SK-N-SH (cell line): ENCODE measurements at regions of chr3 and their contacts with region 1.

Region 1: GRCh38 chr3:49411968-49412631 is at the starts of genes RHOA and TCTA:
- DNase-seq: peak; percentile 100
- H3K4me3 ChIP-seq: peak within 1 kb of the TSS; percentile 78 to 84
- H3K27ac ChIP-seq: peak within 1 kb of the TSS; percentile 89 to 91
- H3K4me1 ChIP-seq: peaks cover 0 to 19% of the 10 kb centered on the region in 2 experiments; a peak in 2 of 4 replicates
- H3K27me3 ChIP-seq: no peaks in the 10 kb centered on the region
- CTCF ChIP-seq: no peak
- EP300 ChIP-seq: no peak
- RAD21 ChIP-seq: no peak
- polyA plus RNA-seq, gene RHOA: 221 and 312 TPM in 2 replicates
- polyA plus RNA-seq, gene TCTA: 42.1 and 57.5 TPM in 2 replicates

Region 2: DNA sequence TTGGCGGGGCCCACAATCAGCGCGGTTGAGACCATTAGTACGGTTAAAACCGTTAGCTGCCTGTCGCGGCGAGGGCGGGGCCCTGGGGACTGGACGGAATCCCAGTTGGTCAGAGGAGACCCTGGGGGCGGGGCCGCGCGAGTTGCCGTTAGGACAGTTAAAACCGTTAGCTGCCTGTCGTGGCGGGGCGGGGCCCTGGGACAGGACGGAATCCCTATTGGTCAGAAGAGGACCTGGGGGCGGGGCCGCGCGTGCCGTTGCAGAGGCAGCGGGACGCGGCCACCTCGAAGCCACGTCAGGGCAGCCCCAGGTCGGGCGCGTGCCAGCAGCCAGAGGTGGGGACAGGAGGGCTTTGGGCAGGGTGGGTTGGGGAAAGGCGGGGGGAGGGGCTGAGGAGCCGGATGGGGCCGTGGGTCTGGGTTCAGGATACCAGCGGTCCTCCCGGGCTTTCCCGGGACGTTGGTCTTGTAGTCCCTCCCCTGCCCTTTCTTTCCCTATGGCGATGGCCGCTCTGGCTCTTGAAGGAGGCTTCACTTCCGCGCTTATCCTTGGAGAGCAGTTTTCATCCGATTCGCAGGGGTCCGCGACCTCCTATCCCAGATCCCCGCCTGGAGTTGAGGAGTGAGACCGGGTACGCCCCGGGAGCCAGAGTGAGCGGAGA is 212.7 kb before region 1 on chr3:
- CTCF ChIA-PET with region 1: no interaction called
- POLR2A ChIA-PET with region 1: no interaction called
- DNase-seq: peak; percentile 47
- H3K4me3 ChIP-seq: no peak overlapping the region
- H3K27ac ChIP-seq: no peak overlapping the region
- H3K4me1 ChIP-seq: no peaks in the 10 kb centered on the region
- H3K27me3 ChIP-seq: no peaks in the 10 kb centered on the region
- CTCF ChIP-seq: no peak
- EP300 ChIP-seq: no peak
- RAD21 ChIP-seq: no peak

Region 3: DNA sequence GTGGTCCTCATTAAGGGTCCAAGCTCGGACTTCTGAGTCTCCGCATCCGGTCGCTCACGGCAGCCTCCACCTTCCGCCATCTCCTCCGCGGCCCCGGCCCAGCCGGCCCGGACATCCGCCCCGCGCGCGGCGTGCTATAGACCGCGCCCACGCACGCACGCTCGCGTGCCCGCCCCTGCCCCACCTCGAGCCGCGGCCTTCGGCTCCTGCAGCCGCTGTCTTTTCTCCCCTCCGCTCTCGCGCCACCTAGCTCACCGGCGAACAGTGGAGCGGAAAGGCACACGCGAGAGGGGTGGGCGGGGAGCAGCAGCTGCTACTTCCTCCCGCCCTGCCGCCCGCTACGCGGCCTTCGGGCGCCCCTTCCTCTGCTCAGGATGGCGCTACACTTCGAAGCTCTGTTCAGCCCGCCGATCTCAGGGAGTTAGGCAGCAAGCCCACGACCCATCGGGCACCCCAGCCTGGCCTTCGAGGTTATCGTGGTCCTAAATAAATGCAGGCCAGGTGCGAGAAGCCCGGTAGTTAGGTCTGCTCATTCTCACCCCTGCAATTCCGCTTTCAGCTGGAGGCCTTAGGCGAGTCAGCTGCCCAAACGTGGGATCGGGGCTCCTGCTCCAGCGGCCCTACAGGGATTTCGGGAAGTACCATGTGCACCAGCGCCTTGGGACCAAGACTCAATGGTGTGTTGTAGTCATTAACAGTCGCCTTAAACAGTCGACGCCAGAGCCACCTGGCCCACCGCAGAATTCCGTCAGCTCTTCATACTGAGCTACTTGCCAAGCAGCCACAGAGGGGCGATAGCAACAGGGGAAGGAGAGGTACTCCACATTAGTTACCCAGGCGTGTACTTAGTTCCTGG is 71.9 kb before region 1 on chr3 and contains the start of gene USP4:
- CTCF ChIA-PET with region 1: interaction called, 3 read pairs
- POLR2A ChIA-PET with region 1: interaction called, 10 read pairs
- DNase-seq: peak; percentile 93
- H3K4me3 ChIP-seq: peak within 1 kb of the TSS; percentile 67 to 69
- H3K27ac ChIP-seq: peak within 1 kb of the TSS; percentile 77 to 93
- H3K4me1 ChIP-seq: peaks cover 5 to 11% of the 10 kb centered on the region in 2 experiments; a peak in 2 of 4 replicates
- H3K27me3 ChIP-seq: no peaks in the 10 kb centered on the region
- CTCF ChIP-seq: peak; percentile 30
- EP300 ChIP-seq: peak in 1 of 2 experiments; percentile 19; a peak in 1 of 4 replicates
- RAD21 ChIP-seq: peak; percentile 56
- polyA plus RNA-seq, gene USP4: 33.2 and 45.6 TPM in 2 replicates

Region 4: GRCh38 chr3:49428697-49429100 is 16.6 kb after region 1 on chr3:
- CTCF ChIA-PET with region 1: interaction called, 4 read pairs
- POLR2A ChIA-PET with region 1: interaction called, 10 read pairs
- DNase-seq: no peak
- H3K4me3 ChIP-seq: peak overlapping the region; percentile 59 to 88
- H3K27ac ChIP-seq: peak overlapping the region; percentile 68 to 92
- H3K4me1 ChIP-seq: peaks cover 0 to 5% of the 10 kb centered on the region in 2 experiments; a peak in 1 of 4 replicates
- H3K27me3 ChIP-seq: no peaks in the 10 kb centered on the region
- CTCF ChIP-seq: 0 out of 2 replicates have a peak, but pooled peaks have one; percentile 15
- EP300 ChIP-seq: no peak
- RAD21 ChIP-seq: peak; percentile 37